ENCODE measurements at regions of chr10 and their contacts with region 1.

Region 1: GRCh38 chr10:15427843-15428414 is 56.8 kb upstream of the FAM171A1 start:
- DNase-seq: no peak
- H3K4me3 ChIP-seq: no peak overlapping the region
- H3K27ac ChIP-seq: no peak overlapping the region
- H3K4me1 ChIP-seq: peaks cover 0 to 18% (median 2%) of the 10 kb centered on the region in 4 donors
- H3K27me3 ChIP-seq: no peaks in the 10 kb centered on the region
- CTCF ChIP-seq: peak; percentile 53 to 69

Region 2: DNA sequence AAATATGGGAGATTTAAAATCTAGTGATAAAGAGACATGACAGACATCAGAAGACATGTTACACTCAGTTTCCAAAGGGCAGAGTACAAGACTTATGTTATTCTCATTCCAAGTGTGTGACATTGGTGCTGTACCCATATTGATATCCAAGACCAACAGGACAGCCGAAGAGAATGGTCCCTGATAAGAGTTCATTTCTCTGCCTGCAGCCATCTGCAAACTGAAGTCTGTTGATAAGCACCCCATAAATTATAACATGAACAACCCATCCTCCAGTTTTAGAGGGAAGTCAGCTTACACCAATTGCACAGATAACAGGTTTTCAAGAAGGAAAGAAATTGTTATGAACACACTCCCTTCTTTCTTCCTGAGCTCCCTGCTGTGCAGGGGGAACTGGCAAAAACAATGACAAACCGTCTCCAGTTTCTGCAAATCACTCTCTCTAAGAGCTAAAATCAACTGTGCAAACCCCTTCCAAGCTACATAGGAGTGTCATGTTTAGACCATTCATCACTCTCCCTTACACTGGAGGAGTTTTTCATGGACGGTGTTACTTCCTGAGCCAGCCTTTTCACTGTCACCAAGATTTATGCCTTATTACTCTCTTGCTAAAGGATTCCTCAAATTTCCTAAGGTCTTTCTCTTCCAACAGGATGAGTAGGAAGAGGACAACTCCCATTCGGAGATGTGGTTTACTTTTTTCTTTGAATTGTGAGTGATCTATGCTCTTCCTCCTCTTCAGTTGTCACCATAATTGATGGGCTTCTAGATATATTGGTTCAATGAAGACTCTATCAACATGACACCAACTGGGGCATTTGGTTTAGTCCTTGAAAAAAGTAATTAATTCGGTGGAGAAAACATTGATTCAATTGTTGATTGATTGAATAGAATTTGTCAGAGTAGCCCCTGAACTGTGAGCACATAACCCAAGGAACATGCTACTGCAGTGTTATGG is 23.5 kb after region 1 on chr10:
- intact Hi-C with region 1: no loop called
- DNase-seq: no peak
- H3K4me3 ChIP-seq: no peak overlapping the region
- H3K27ac ChIP-seq: no peak overlapping the region
- H3K4me1 ChIP-seq: peaks cover 0 to 16% (median 0%) of the 10 kb centered on the region in 4 donors
- H3K27me3 ChIP-seq: no peaks in the 10 kb centered on the region
- CTCF ChIP-seq: no peak

Region 3: GRCh38 chr10:15744217-15744865 is 316.4 kb after region 1 on chr10:
- intact Hi-C with region 1: loop called (anchors 10 kb)
- DNase-seq: peak in 1 of 2 donors; percentile 46
- H3K4me3 ChIP-seq: no peak overlapping the region
- H3K27ac ChIP-seq: no peak overlapping the region
- H3K4me1 ChIP-seq: peaks cover 0 to 19% (median 2%) of the 10 kb centered on the region in 4 donors
- H3K27me3 ChIP-seq: no peaks in the 10 kb centered on the region
- CTCF ChIP-seq: peak; percentile 34 to 35

Region 4: DNA sequence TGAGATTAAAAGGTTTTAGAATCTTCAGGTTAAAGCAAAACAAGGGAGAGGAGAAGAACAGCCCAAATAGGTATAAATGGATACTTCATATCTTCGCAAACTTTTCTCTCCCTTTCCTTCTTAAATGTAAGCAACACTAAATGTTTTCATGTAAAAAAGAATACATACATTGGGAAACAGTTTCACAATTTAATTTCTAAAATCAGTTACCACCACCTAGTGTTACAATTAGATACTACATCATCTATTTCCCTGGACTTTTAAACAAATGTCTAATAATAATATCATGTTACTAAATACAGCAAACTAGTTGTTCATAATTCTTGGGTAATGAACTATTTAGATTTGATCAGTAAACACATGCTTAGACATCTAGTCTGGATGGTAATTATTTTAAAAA is 396.6 kb after region 1 on chr10:
- intact Hi-C with region 1: loop called (anchors 2 kb)
- DNase-seq: no peak
- H3K4me3 ChIP-seq: no peak overlapping the region
- H3K27ac ChIP-seq: no peak overlapping the region
- H3K4me1 ChIP-seq: peaks cover 0 to 11% (median 0%) of the 10 kb centered on the region in 4 donors
- H3K27me3 ChIP-seq: no peaks in the 10 kb centered on the region
- CTCF ChIP-seq: peak; percentile 61 to 66